A549 (cell line): ENCODE measurements at regions of chr17 and their contacts with region 1.

Region 1: GRCh38 chr17:42677008-42677857 is 439 bp upstream of the PLEKHH3 start:
- DNase-seq: peak; percentile 100
- ATAC-seq: peak; percentile 45 to 64
- H3K4me3 ChIP-seq: peak overlapping the region; percentile 87
- H3K27ac ChIP-seq: peak overlapping the region; percentile 95 to 98
- H3K4me1 ChIP-seq: peaks cover 56% of the 10 kb centered on the region
- CTCF ChIP-seq: no peak
- EP300 ChIP-seq: peak in 1 of 2 experiments; percentile 18; a peak in 1 of 5 replicates
- POLR2A ChIP-seq: no peak
- RAD21 ChIP-seq: no peak; a peak in 2 of 5 replicates

Region 2: GRCh38 chr17:42554250-42555121 is 122.7 kb before region 1 on chr17:
- CTCF ChIA-PET with region 1: interaction called, 13 read pairs
- POLR2A ChIA-PET with region 1: interaction called, 3 read pairs
- DNase-seq: peak; percentile 82 to 88
- ATAC-seq: peak; percentile 81 to 89
- H3K4me3 ChIP-seq: peak overlapping the region; percentile 87
- H3K27ac ChIP-seq: peak overlapping the region; percentile 94
- H3K4me1 ChIP-seq: peaks cover 17% of the 10 kb centered on the region
- CTCF ChIP-seq: no peak
- EP300 ChIP-seq: no peak
- POLR2A ChIP-seq: peak; percentile 88
- RAD21 ChIP-seq: no peak

Region 3: DNA sequence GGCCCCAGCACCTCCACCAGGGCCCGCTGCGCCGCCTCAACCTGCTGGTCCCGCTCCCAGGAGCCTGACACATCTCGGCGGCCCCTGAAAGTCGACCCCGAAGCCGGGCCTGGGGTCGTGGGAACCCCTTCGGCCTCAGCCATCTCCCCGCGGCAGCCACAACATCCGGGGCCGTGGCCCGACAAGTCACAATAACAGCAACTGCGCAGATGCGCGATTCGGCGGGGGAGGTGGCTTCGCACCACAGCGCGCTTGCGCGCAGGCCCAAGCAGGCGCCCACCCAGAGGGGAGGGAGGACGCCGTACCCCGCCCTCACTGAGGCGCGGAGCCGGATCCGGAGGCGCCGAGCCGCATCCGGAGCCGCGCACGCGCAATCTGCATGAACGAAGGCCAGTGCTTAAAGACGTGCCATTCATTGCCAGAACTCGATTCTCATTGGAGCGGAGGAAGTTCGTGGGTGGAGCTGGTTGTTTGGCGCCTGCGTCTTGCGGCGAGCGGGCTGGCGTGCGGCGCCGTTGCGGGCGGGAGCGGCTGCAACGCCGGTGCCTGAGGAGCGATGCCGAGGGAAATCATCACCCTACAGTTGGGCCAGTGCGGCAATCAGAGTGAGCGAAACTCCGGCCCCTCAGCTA is 67.9 kb before region 1 on chr17 and contains the starts of genes RETREG3 and TUBG1:
- CTCF ChIA-PET with region 1: interaction called, 75 read pairs
- POLR2A ChIA-PET with region 1: interaction called, 43 read pairs
- DNase-seq: peak; percentile 99 to 100
- ATAC-seq: peak; percentile 89 to 94
- H3K4me3 ChIP-seq: peak within 1 kb of the TSS; percentile 90
- H3K27ac ChIP-seq: peak within 1 kb of the TSS; percentile 91 to 92
- H3K4me1 ChIP-seq: peaks cover 22% of the 10 kb centered on the region
- CTCF ChIP-seq: no peak
- EP300 ChIP-seq: no peak
- POLR2A ChIP-seq: peak; percentile 99
- RAD21 ChIP-seq: no peak
- polyA plus RNA-seq, gene RETREG3: 28.3 and 45.9 TPM in 2 replicates
- polyA plus RNA-seq, gene TUBG1: 73.3 and 79.3 TPM in 2 replicates

Region 4: GRCh38 chr17:42623732-42624596 is 53.3 kb before region 1 on chr17:
- CTCF ChIA-PET with region 1: interaction called, 75 read pairs
- POLR2A ChIA-PET with region 1: interaction called, 8 read pairs
- DNase-seq: peak; percentile 80 to 86
- ATAC-seq: peak; percentile 85 to 90
- H3K4me3 ChIP-seq: no peak overlapping the region
- H3K27ac ChIP-seq: peak overlapping the region; percentile 52 to 70; a peak in 5 of 6 replicates
- H3K4me1 ChIP-seq: peaks cover 15% of the 10 kb centered on the region
- CTCF ChIP-seq: peak; percentile 29; the same call in 2 of the 3 replicates
- EP300 ChIP-seq: no peak
- POLR2A ChIP-seq: no peak
- RAD21 ChIP-seq: peak in 1 of 2 experiments; percentile 12; a peak in 2 of 5 replicates

Region 5: DNA sequence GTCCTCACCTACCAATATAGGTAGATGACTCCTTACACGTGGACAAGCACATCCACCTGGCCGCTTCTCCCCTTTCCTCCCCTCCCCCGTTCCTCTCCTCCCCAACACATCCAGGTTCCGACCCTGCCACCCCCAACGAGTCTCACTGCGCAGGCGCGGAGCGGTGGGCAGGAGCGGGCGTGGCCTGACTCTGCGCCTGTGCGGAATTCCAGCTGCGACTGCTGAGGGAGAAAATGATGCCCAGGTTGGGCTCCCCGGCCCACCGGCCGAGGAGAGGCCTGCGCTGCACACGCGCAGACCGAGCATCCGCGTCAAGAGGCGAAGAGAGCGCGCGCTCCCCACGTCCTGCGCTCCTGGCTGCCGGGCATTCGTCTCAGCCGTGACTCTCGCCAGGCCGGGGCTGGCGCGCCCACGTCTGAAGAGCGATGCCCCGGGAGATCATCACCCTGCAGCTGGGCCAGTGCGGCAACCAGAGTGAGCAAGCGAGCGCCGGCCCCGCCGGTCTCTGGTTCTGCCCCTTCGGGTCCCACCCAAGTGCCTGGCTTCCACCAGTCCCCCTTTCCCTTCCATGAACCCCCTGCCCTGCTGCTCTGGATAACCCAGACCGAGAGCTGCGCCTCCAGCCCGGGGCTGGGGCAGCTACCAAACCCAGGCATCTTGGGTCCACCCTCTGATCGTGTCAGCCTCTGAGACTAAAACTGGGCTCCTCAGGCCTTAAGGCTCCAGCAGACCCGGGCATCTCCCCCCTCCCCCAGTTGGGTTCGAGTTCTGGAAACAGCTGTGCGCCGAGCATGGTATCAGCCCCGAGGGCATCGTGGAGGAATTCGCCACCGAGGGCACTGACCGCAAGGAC is 17.9 kb before region 1 on chr17 and contains the start of gene TUBG2:
- CTCF ChIA-PET with region 1: interaction called, 44 read pairs
- POLR2A ChIA-PET with region 1: interaction called, 15 read pairs
- DNase-seq: peak; percentile 94 to 99
- ATAC-seq: peak; percentile 89 to 95
- H3K4me3 ChIP-seq: peak within 1 kb of the TSS; percentile 67
- H3K27ac ChIP-seq: peak within 1 kb of the TSS; percentile 85 to 94
- H3K4me1 ChIP-seq: peaks cover 18% of the 10 kb centered on the region
- CTCF ChIP-seq: no peak
- EP300 ChIP-seq: no peak
- POLR2A ChIP-seq: peak; percentile 98
- RAD21 ChIP-seq: 0 out of 5 replicates have a peak, but pooled peaks have one; percentile 3 to 21
- polyA plus RNA-seq, gene TUBG2: 14.9 and 18.6 TPM in 2 replicates

Region 6: DNA sequence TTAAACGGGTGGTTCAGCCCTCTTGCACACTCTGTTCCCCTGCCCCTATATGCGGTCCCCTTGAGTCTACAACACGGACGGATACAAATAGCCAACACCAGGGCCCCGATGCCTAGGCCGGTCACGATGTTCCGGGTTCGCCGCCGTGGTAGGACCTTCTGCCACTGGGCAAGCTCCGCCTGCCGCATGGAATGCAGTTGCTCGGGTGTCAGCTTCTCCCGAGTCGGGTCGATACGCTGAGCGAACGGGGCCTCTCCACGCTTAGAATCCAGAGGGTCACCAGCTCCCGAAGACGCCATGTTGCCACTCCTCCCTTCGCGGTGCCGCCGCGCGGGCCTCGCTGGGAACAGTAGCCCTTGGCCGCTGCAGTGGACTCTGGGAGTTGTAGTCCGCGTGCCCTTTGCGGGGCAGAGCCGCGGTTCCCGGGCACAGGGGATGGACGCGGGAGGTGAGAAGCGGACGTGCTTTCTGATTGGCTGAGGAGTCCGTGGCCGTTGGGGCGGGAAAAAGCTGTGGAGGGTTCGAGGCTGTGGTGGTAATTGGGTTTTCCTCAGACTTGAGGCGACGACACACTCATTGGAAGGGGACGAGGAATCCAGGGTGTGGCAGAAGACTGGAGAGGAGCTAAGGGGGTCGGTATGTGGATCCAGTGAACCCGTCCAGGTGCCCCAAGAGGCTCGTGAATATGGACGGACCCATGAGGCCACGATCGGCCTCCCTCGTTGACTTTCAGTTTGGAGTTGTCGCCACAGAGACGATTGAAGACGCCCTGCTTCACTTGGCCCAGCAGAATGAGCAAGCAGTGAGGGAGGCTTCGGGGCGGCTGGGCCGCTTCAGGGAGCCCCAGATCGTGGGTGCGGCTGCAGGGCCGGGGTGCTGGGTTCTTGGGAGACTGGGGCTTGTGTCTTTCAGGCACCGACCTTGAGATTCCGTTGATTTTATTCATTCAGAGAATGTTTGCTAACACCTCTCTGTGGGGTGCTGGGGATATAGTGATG is 121.4 kb after region 1 on chr17 and contains the starts of genes CNTD1 and COA3:
- CTCF ChIA-PET with region 1: no interaction called
- POLR2A ChIA-PET with region 1: no interaction called
- DNase-seq: peak; percentile 92 to 96
- ATAC-seq: peak; percentile 97 to 99
- H3K4me3 ChIP-seq: peak within 1 kb of the TSS; percentile 72
- H3K27ac ChIP-seq: peak within 1 kb of the TSS; percentile 83 to 92
- H3K4me1 ChIP-seq: peaks cover 38% of the 10 kb centered on the region
- CTCF ChIP-seq: no peak
- EP300 ChIP-seq: no peak
- POLR2A ChIP-seq: peak; percentile 81
- RAD21 ChIP-seq: no peak
- polyA plus RNA-seq, gene CNTD1: 0.06 and 0.07 TPM in 2 replicates
- polyA plus RNA-seq, gene COA3: 126 and 170 TPM in 2 replicates

Region 7: DNA sequence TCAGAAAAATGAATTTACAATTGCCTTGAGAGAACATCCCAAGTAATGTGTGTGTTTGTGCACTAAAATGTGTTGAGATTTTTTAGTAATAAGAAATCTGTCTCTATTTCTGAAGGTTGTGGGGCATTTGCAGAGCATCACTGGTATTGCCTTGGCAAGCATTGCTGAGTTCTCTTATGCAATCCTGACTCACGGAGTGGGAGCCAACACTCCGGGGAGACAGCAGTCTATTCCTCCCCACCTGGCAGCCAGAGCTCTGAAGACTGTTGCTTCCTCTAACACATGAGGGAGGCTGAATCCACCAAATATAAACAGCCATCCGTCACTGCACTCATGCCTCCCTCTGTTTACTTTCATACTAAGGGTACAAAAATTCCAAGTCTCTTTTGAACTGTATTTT is 132.0 kb after region 1 on chr17:
- CTCF ChIA-PET with region 1: no interaction called
- POLR2A ChIA-PET with region 1: no interaction called
- DNase-seq: peak; percentile 27 to 49
- ATAC-seq: peak; percentile 63 to 65; a peak in 3 of 6 replicates
- H3K4me3 ChIP-seq: no peak overlapping the region
- H3K27ac ChIP-seq: peak overlapping the region in 1 of 2 experiments; percentile 9; a peak in 1 of 6 replicates
- H3K4me1 ChIP-seq: peaks cover 21% of the 10 kb centered on the region
- CTCF ChIP-seq: no peak
- EP300 ChIP-seq: no peak
- POLR2A ChIP-seq: no peak
- RAD21 ChIP-seq: no peak